Head of caudate nucleus (tissue), 42 donors: ENCODE measurements at regions of chr15 and their contacts with region 1.

Region 1: DNA sequence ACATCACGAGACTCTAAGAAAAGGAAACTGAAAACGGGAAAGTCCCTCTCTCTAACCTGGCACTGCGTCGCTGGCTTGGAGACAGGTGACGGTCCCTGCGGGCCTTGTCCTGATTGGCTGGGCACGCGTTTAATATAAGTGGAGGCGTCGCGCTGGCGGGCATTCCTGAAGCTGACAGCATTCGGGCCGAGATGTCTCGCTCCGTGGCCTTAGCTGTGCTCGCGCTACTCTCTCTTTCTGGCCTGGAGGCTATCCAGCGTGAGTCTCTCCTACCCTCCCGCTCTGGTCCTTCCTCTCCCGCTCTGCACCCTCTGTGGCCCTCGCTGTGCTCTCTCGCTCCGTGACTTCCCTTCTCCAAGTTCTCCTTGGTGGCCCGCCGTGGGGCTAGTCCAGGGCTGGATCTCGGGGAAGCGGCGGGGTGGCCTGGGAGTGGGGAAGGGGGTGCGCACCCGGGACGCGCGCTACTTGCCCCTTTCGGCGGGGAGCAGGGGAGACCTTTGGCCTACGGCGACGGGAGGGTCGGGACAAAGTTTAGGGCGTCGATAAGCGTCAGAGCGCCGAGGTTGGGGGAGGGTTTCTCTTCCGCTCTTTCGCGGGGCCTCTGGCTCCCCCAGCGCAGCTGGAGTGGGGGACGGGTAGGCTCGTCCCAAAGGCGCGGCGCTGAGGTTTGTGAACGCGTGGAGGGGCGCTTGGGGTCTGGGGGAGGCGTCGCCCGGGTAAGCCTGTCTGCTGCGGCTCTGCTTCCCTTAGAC is at the start of gene B2M:
- DNase-seq: peak; percentile 93 to 98 (median 96)

Region 2: GRCh38 chr15:44676676-44677075 is 34.9 kb before region 1 on chr15:
- intact Hi-C with region 1: no loop called
- DNase-seq: no peak

Region 3: DNA sequence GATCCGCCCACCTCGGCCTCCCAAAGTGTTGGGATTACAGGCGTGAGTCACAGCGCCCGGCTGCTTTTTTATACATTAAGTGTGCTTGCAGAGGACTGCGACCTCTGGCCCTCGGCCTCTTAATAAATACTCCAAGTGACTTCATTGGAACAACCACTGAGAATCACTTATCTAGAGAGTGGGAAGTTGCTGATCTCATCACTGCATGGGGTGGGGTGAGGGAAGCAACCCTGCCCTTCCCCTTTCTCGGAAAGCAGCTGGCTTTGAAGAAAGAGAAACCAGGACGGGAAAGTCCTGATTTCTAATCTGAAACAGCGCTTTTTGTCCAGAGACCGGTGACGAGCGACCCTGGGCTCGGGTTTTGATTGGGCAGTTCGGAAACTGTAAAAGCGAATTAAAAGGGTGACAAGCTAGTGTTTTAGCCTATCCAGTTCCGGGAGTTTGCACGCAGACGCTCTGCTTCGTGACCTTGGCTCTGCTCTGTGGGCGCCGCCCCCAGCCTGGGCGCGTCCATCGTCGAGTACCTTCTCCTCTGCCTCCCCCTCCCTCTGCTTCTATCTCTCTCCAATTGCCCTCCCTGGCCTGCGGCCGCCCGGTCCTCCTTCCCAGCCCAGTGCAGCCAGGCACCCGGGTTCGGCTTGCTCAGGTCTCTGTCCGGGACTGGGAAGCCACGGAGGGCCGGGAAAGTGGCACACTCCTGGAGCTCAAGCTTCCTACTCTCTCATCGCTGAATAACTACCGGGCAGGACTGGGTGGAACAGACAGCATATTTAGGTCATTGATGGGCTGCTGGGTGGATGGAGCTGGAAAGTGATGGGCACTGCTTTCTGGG is 17.3 kb after region 1 on chr15:
- intact Hi-C with region 1: loop called (anchors 2 kb)
- DNase-seq: peak; percentile 89 to 98 (median 96)